ENCODE measurements at regions of chr15 and their contacts with region 1.

Region 1: DNA sequence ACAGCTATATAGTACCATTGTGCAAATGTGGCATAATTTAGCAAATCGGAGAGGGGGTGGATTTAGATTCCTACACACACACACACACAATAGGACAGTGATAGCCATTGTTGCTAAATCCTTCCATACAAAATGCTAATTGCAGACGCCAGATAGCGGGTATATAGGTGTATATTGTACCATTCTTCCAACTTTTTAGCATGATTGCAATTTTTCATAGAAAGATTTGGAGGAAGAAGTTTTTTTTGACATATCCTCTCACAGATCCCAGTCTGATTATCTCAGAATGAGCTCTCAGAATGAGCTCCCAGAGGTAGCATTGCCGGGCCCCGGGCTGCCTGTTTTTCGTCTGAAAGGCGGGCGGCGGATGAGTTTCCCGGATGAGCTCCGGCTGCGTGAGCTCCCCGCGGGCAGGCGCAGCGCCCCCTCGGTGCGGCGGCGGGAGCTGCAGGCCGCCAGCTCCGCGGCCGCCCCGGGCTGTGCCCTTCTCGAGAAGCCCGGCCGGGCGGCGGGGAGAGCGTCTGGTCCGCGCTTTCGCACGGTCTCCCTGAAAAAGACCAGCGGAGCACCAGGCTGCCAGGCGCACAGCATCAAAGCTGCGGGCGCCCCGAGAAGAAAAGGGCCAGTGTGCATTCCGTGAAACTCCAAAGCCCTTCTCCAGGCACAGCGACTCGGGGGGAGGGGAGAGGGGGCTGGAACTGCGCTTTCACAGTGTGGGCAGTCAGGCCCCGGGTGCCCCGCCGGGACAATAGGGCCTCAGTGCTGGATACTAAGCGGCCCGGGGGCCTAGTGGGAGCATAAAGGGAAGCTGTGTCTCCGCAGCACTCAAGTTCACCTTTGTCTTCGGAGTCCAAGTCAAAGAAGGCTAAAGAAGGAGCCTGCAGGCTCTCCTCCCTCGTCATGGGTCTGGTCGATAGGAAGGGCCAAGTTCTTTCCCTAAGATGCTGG is 12.0 kb upstream of the SHC4 start:
- DNase-seq: peak; percentile 72
- H3K4me3 Mint-ChIP-seq: peak overlapping the region; percentile 47
- H3K27ac Mint-ChIP-seq: no peak overlapping the region
- H3K4me1 Mint-ChIP-seq: peaks cover 3% of the 10 kb centered on the region
- H3K27me3 Mint-ChIP-seq: peaks cover 7% of the 10 kb centered on the region

Region 2: DNA sequence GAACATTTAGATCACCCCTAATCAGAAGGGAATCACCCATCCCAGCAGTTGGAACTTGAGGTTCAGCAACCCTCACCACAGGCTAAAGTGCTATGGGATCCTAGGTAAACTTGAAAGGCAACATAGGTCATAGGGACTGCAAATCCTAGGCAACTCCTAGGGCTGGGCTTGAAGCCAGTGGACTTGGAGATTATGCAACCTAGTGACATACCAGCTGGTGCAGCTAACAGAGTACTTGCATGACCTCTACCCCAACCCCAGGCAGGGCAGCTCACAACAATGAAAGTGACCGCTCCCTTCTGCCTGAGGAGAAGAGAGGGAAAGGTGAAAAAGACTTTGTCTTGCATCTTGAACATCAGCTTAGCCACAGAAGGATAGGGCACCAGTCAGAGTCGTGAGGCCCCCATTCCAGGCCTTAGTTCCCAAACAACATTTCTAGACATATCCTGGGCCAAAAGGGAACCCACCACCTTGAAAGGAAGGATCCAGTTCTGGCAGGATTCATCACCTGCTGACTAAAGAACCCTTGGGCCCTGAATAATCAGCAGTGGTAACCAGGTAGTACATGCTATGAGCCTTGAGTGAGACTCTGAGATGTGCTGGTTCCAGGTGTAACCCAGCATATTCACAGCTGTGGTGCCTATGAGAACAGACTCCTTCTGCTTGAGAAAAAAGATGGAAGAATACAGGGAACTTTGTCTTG is 292.6 kb before region 1 on chr15:
- CTCF ChIA-PET with region 1: no interaction called
- POLR2A ChIA-PET with region 1: no interaction called
- DNase-seq: no peak
- H3K4me3 Mint-ChIP-seq: no peak overlapping the region
- H3K27ac Mint-ChIP-seq: no peak overlapping the region
- H3K4me1 Mint-ChIP-seq: no peaks in the 10 kb centered on the region
- H3K27me3 Mint-ChIP-seq: no peaks in the 10 kb centered on the region

Region 3: DNA sequence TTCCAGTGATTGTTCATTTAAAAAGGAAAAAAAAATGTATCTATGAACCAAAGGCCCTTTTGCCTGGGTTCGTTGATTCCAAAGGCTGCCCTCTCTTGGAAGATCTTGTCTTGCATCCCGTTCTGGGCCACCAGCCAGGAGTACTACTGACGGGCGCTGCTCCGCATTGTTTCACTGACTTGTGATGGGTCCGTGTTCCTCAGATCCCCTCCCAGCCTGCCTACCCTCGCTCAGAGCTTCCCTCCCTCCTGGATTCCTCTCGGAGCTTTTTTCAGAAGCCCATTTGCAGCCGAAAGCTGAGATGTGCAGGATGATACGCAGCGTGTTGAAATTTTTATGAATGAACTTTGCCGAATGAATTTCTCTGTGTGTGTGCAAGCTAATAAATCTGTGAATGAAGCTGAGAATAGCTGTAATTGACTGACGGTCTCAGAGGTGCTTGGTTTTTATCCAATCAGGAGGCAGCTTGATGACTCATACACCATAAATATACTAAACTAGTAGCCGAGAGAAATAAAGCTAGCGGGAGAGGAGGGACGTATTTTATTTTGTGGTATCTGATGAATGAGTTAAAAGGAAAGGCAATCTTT is 12.1 kb before region 1 on chr15 and contains the start of gene SHC4:
- CTCF ChIA-PET with region 1: interaction called, 88 read pairs
- POLR2A ChIA-PET with region 1: interaction called, 3 read pairs
- DNase-seq: peak; percentile 30
- H3K4me3 Mint-ChIP-seq: peak within 1 kb of the TSS; percentile 63
- H3K27ac Mint-ChIP-seq: peak within 1 kb of the TSS; percentile 48
- H3K4me1 Mint-ChIP-seq: peaks cover 45% of the 10 kb centered on the region
- H3K27me3 Mint-ChIP-seq: peaks cover 43% of the 10 kb centered on the region
- total RNA-seq, gene SHC4: 0.30 to 0.46 TPM

Region 4: GRCh38 chr15:48992545-48992944 is 16.8 kb after region 1 on chr15:
- CTCF ChIA-PET with region 1: interaction called, 11 read pairs
- POLR2A ChIA-PET with region 1: no interaction called
- DNase-seq: no peak
- H3K4me3 Mint-ChIP-seq: no peak overlapping the region
- H3K27ac Mint-ChIP-seq: no peak overlapping the region
- H3K4me1 Mint-ChIP-seq: no peaks in the 10 kb centered on the region
- H3K27me3 Mint-ChIP-seq: no peaks in the 10 kb centered on the region

Region 5: DNA sequence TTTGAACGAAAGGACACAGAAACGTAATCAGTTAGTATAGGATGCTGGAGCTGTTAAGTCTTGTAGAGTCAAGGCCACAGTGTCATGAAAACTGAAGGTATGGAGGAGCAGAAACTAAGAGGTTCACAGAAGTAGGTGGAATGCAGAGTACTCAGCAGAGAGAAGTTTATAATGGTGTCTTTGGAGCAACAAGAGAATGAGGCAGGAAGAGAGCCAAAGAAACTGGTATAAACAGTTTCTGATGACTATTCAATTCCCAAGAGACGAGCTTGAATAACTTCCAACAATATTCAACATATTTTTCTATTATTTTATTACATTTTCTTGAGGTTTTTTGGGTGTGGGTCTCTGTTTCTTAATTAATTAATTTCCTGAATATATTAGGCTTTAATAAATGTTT is 223.9 kb after region 1 on chr15:
- CTCF ChIA-PET with region 1: no interaction called
- POLR2A ChIA-PET with region 1: no interaction called
- DNase-seq: no peak
- H3K4me3 Mint-ChIP-seq: no peak overlapping the region
- H3K27ac Mint-ChIP-seq: no peak overlapping the region
- H3K4me1 Mint-ChIP-seq: peaks cover 5% of the 10 kb centered on the region
- H3K27me3 Mint-ChIP-seq: no peaks in the 10 kb centered on the region